Right lobe of liver (tissue), 6 donors: ENCODE measurements at regions of chr14 and their contacts with region 1.

Region 1: DNA sequence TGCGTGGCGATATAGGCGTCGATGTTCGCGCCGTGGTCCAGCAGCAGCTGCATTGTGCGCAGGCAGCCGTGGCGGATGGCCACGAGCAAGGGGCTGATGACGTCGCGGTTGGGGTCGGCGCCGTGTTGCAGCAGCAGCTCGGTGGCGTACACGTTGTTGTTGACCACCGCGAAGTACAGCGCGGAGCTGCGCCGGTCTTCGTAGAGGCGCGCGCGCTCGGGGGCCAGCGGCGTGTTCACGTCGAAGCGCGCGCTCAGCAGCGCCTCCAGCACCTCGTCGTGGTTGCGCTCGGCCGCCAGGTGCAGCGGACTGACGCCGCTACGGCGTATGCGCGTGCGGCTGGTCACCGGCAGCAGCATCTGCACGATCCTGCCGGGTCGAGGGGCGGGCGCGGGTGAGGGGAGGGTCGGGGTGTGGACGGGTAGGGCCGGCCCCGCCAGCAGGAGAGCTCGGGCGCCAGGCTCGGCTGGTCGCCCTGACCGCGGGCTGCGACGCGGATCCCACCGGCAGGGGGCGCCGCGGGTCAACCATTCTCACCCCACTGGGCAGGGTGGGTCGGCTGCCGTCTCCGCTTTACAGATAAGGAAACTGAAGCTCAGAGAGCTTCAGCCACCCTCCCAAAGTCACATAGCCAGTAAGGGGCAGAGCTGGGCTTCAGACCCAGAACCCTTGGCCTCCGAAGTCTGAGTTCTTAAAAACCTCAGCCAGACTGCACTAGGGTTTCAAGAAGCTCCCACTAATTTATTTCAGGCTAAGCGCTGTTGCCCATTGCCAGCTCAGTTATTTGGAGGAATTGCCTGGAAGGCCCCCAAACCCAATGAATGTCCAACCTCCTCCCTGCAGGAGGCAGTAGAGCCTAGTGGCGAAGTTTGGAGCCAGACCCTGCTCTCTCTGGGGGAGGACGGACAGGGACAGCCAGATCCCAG is 12.4 kb downstream of the FAM181A start:
- DNase-seq: peak; percentile 73 to 85 (median 79)
- ATAC-seq: peak; percentile 87 to 97 (median 92)
- H3K4me3 ChIP-seq: peak overlapping the region; percentile 21 to 27 (median 25)
- H3K27ac ChIP-seq: no peak overlapping the region
- H3K4me1 ChIP-seq: no peaks in the 10 kb centered on the region
- H3K27me3 ChIP-seq: peaks cover 0 to 11% of the 10 kb centered on the region in 2 donors
- CTCF ChIP-seq: peak; percentile 80 to 95 (median 90)
- POLR2A ChIP-seq: no peak

Region 2: GRCh38 chr14:93381644-93382043 is 557.9 kb before region 1 on chr14:
- intact Hi-C with region 1: no loop called
- DNase-seq: no peak
- ATAC-seq: no peak
- H3K4me3 ChIP-seq: no peak overlapping the region
- H3K27ac ChIP-seq: no peak overlapping the region
- H3K4me1 ChIP-seq: no peaks in the 10 kb centered on the region
- H3K27me3 ChIP-seq: no peaks in the 10 kb centered on the region
- CTCF ChIP-seq: no peak
- POLR2A ChIP-seq: no peak

Region 3: DNA sequence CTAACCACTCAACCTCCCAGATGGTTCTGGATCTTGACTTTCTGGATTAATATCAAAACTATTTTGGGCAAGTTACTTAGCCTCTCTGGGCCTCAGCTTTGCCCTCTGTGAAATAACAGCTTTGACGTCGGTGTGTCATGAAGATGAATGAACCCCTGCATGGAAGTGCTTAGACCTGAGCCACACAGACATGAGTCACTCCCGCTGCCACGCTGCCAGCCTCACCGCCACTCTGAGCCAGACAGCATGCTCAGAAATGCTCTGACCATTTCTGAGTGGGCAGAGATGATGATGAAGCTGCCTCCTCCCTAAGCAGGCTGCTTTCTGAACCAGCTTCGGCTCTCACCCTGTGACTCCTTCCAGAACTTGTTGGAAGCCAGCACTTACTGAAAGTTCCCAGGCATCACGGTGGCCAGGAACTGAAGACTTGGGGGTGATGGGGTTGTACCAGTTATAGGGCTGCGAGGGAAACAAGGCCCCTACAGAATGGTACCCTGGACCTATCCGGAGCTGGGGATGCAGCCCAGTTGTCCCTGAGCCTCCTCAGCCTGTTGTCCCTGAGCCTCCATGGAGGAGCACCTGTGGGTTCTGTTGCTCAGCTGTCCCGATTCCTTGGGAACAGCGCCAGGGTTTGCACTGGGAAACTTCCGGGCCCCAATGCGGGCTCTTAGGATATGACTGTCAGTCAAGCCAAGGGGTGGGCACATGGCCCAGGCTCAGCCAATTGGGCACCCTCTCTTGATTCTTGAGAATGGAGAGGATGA is 55.5 kb after region 1 on chr14:
- intact Hi-C with region 1: loop called in 1 of 2 experiments (anchors 10 kb)
- DNase-seq: no peak
- ATAC-seq: no peak
- H3K4me3 ChIP-seq: no peak overlapping the region
- H3K27ac ChIP-seq: no peak overlapping the region
- H3K4me1 ChIP-seq: no peaks in the 10 kb centered on the region
- H3K27me3 ChIP-seq: no peaks in the 10 kb centered on the region
- CTCF ChIP-seq: no peak
- POLR2A ChIP-seq: no peak

Region 4: DNA sequence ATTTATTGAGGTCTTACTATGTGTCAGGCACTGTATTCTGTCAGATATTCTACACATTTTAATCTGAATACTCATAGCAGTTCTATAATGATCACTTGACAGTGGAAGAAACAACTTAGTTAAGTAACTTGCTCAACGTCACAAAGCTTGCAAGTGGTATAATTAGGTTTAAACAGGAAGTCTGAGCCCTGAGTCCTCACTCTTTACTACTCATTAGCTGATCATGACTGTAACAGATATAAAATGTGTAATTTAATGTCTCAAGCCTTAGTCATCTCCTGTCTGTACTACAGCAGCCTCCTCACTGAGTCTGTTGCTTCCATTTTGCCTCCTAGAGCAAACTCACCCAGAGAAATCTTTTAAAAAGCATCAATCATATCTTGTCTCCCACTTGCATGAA is 273.5 kb after region 1 on chr14:
- intact Hi-C with region 1: no loop called
- DNase-seq: no peak
- ATAC-seq: no peak
- H3K4me3 ChIP-seq: no peak overlapping the region
- H3K27ac ChIP-seq: no peak overlapping the region
- H3K4me1 ChIP-seq: no peaks in the 10 kb centered on the region
- H3K27me3 ChIP-seq: no peaks in the 10 kb centered on the region
- CTCF ChIP-seq: no peak
- POLR2A ChIP-seq: no peak